ENCODE measurements at regions of chr3 and their contacts with region 1.

Region 1: DNA sequence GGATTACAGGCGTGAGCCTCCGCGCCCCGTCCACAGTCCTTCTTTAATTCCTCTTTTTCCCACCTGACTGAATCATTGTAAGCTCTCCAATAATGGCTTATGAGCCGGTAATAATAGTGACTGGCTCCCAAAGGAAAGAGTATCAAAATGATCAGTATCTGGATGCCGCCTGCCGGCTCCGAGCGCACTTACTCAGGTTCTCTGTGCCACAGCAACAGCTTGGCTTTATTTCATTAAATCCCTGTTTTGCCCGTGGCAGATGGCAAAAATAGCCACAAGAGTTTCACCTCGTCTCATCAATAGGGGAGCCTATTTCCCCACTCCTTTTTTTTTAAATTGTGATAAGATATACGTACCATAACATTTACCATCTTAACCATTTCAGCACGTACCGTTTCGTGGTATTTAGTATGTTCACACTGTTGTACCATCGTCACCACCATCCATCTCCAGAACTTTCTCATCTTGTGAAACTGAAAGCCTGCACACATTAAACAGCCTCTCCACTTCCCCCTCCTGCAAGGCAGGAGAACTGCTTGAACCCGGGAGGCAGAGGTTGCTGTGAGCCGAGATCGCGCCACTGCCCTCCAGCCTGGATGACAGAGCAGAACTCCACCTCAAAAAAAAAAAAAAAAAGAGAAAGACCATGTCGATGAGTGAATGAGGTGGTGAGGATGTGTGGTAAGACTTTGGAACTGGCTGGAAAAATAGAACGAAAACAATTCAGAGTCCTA is 80.7 kb upstream of the DLG1 start:
- DNase-seq: no peak
- H3K4me3 ChIP-seq: no peak overlapping the region
- H3K27ac ChIP-seq: peak overlapping the region in 35 of 59 donors; percentile 19 to 85 (median 75)
- H3K27me3 ChIP-seq: no peaks in the 10 kb centered on the region
- CTCF ChIP-seq: no peak

Region 2: GRCh38 chr3:197466586-197467399 is 87.6 kb after region 1 on chr3:
- intact Hi-C with region 1: loop called in 1 of 2 experiments (anchors 2 kb)
- DNase-seq: peak in 4 of 10 donors; percentile 19 to 80 (median 49)
- H3K4me3 ChIP-seq: peak overlapping the region in 25 of 59 donors; percentile 1 to 35 (median 20)
- H3K27ac ChIP-seq: peak overlapping the region in 58 of 59 donors; percentile 20 to 96 (median 80)
- H3K27me3 ChIP-seq: no peaks in the 10 kb centered on the region
- CTCF ChIP-seq: no peak

Measured in dorsolateral prefrontal cortex (tissue), 120 donors.